ENCODE measurements at regions of chr14 and their contacts with region 1.

Region 1: DNA sequence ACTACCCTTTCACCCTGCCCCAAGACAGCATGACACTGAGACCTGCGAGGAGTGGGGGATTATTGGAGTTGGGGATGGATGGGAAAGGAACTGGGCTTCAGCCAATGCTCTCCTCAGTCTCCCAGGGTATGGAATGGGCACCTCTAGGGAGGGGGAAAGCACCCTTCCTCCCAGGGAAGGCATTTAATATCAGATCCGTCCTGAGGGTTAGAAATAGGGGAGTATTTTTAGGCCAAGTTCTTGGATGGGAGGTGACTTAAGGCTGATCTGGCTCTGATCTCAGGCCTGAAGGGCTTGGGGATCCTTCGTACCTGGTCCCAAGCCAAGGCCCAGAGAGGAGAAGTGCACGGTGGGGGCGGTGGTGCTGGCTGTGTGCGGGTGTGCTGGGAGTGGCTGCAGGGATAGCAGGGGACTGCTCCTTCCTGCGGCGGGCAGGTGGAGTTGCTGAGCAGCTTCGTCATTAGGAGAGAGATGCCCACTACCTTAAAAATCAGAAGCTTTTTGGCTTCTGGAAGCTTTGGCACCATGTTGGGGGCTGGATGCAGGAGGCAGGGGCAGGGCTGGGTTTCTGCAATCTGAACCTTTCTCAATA is 7.0 kb upstream of the CEBPE start:
- DNase-seq: peak in 4 of 42 donors; percentile 14 to 52 (median 34)

Region 2: GRCh38 chr14:23167116-23167847 is 41.3 kb after region 1 on chr14:
- intact Hi-C with region 1: loop called (anchors 5 kb)
- DNase-seq: no peak

Region 3: DNA sequence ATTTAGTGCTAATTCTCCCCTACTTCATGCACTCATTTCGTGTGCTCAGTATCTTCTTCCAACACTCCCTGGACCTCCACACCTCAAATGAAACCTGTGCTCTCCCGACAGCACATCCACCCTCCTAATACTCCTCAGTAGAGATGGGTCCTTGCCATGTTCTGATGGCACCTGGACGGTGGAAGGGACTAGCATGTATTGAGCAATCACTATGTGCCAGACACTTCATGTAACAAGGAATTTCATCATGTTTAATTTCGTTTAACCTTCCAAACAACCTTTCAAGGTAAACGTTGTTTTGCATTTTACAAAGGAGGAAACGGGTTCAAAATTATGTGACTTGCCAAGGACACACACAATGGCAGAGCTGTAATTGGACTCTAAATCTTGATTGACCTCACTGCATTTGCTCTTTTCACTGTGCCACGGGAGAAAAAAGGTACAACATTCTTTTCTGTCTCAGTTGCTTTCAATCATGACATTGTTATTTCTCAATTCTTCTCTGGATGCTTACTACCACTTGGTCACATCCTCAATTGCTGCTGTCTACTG is 69.6 kb after region 1 on chr14:
- intact Hi-C with region 1: no loop called
- DNase-seq: no peak

Measured in head of caudate nucleus (tissue), 42 donors.